ENCODE measurements at regions of chr15 and their contacts with region 1.

Region 1: DNA sequence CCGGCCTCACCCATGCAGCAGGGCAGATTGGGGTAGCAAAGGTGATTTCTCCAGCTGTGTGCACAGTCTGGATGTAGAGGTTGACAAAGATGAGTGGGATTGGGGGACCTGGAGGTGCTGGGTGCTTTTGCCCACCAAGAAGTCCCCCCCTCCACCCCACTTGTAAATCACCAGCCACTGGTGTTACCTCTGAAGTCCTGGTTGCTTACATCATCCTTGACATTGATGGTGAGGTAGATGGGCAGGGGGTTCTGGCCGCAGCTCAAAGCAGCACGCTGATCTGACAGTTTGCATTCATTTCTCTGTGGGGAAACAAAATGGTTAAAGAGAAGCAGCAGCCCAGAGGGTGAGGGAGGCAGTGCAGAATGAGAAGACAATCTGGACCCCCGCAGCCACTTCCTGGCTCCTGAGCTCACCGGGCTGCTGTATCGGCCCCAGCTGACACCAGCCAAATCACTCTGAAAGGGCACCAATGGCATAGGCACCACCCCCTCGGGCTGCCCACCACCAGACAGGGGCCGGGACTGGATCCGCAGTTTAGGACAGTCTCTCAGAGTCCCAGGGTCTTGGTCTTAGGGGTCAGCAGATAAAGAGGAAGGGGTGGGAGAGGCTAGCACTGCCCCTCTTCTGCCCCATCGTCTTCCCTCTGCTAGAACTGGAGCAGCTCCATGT is 17.7 kb upstream of the EHD4 start:
- DNase-seq: no peak
- ATAC-seq: no peak
- H3K4me3 ChIP-seq: no peak overlapping the region
- H3K27ac ChIP-seq: no peak overlapping the region
- H3K4me1 ChIP-seq: peaks cover 4% of the 10 kb centered on the region
- H3K27me3 ChIP-seq: no peaks in the 10 kb centered on the region
- CTCF ChIP-seq: no peak
- POLR2A ChIP-seq: no peak

Region 2: DNA sequence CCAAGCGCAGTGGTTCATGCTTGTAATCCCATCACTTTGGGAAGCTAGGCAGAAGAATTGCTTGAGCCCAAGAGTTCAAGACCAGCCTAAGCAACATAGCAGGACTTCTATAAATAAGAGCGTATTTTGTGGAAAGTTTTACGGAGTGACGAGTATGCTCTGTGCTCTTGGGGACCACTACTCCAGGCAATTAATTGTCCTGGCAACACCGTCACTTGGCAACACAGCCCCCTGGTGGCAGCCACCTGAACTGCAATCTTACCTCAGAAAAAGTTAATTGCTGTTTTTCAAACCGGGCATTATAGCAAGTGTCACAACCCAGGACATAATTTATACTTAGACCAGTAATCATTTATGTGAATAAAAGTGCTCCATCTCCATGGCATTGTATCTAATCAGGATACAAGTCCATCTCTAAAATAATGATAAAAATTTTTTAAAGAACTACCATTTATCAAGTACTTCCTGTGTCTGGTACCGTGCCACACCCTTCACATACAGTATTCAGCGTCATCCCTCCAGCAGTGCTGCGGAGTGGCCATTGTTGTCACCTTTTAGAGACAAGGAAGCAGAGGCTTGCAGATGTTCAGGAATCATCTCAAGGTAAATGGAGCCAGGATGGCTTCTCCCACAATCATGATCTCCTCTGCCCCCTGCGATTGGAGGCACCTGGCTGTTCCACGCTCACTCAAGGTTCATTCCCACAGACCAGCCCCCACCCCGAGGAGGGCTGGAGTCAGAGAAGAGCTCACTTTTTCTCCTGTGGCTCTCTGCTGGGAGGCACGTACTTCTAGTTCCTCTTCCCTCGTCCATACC is 69.8 kb after region 1 on chr15:
- intact Hi-C with region 1: loop called (anchors 5 kb)
- DNase-seq: peak; percentile 57 to 78 (median 73)
- ATAC-seq: peak; percentile 23
- H3K4me3 ChIP-seq: no peak overlapping the region
- H3K27ac ChIP-seq: peak overlapping the region in 3 of 4 donors; percentile 19 to 63 (median 22)
- H3K4me1 ChIP-seq: peaks cover 36% of the 10 kb centered on the region
- H3K27me3 ChIP-seq: no peaks in the 10 kb centered on the region
- CTCF ChIP-seq: peak; percentile 75 to 95 (median 89)
- POLR2A ChIP-seq: no peak

Region 3: GRCh38 chr15:42084460-42085235 is 94.6 kb after region 1 on chr15:
- intact Hi-C with region 1: loop called (anchors 5 kb)
- DNase-seq: peak; percentile 62 to 75 (median 74)
- ATAC-seq: peak; percentile 90
- H3K4me3 ChIP-seq: no peak overlapping the region
- H3K27ac ChIP-seq: no peak overlapping the region
- H3K4me1 ChIP-seq: peaks cover 21% of the 10 kb centered on the region
- H3K27me3 ChIP-seq: no peaks in the 10 kb centered on the region
- CTCF ChIP-seq: peak; percentile 89 to 95 (median 91)
- POLR2A ChIP-seq: no peak

Region 4: GRCh38 chr15:42137431-42138261 is 147.6 kb after region 1 on chr15:
- intact Hi-C with region 1: loop called (anchors 10 kb)
- DNase-seq: peak in 2 of 4 donors; percentile 33 to 50
- ATAC-seq: peak; percentile 38
- H3K4me3 ChIP-seq: no peak overlapping the region
- H3K27ac ChIP-seq: no peak overlapping the region
- H3K4me1 ChIP-seq: no peaks in the 10 kb centered on the region
- H3K27me3 ChIP-seq: no peaks in the 10 kb centered on the region
- CTCF ChIP-seq: peak; percentile 33 to 69 (median 63)
- POLR2A ChIP-seq: no peak

Measured in body of pancreas (tissue), 4 donors.